Right cardiac atrium (tissue), 5 donors: ENCODE measurements at regions of chr7 and their contacts with region 1.

Region 1: GRCh38 chr7:97104719-97105238 is 12.7 kb upstream of the SDHAF3 start:
- DNase-seq: peak; percentile 84 to 95 (median 94)
- ATAC-seq: peak; percentile 94 to 96
- H3K4me3 ChIP-seq: no peak overlapping the region
- H3K27ac ChIP-seq: no peak overlapping the region
- H3K4me1 ChIP-seq: no peaks in the 10 kb centered on the region
- H3K27me3 ChIP-seq: no peaks in the 10 kb centered on the region

Region 2: DNA sequence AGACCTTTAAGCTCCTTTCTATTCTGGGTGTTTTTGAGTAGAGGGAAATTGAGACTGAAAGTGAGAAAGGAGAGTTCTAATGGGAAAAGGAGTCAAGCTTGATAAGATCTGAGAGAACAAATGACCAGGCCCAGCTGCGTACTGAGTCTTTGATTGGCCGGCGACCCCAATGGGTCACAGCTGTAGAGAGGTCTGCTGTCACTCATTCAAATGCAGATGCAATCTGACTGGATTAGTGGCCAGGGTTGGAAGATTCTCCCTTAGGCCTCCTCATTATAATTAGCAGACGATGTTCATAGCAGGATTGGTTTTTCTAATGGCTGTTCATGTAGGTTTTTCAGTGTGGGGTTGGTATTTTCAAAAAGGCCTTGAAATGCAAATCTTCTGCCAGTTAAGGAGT is 655.7 kb before region 1 on chr7:
- intact Hi-C with region 1: no loop called
- DNase-seq: no peak
- ATAC-seq: no peak
- H3K4me3 ChIP-seq: no peak overlapping the region
- H3K27ac ChIP-seq: no peak overlapping the region
- H3K4me1 ChIP-seq: no peaks in the 10 kb centered on the region
- H3K27me3 ChIP-seq: no peaks in the 10 kb centered on the region

Region 3: GRCh38 chr7:96837593-96837992 is 267.2 kb before region 1 on chr7:
- intact Hi-C with region 1: no loop called
- DNase-seq: no peak
- ATAC-seq: no peak
- H3K4me3 ChIP-seq: no peak overlapping the region
- H3K27ac ChIP-seq: no peak overlapping the region
- H3K4me1 ChIP-seq: no peaks in the 10 kb centered on the region
- H3K27me3 ChIP-seq: no peaks in the 10 kb centered on the region

Region 4: GRCh38 chr7:97179454-97180104 is 74.8 kb after region 1 on chr7:
- intact Hi-C with region 1: loop called in 3 of 4 experiments (anchors 2 to 5 kb)
- DNase-seq: no peak
- ATAC-seq: peak; percentile 40 to 67
- H3K4me3 ChIP-seq: no peak overlapping the region
- H3K27ac ChIP-seq: no peak overlapping the region
- H3K4me1 ChIP-seq: no peaks in the 10 kb centered on the region
- H3K27me3 ChIP-seq: no peaks in the 10 kb centered on the region

Region 5: DNA sequence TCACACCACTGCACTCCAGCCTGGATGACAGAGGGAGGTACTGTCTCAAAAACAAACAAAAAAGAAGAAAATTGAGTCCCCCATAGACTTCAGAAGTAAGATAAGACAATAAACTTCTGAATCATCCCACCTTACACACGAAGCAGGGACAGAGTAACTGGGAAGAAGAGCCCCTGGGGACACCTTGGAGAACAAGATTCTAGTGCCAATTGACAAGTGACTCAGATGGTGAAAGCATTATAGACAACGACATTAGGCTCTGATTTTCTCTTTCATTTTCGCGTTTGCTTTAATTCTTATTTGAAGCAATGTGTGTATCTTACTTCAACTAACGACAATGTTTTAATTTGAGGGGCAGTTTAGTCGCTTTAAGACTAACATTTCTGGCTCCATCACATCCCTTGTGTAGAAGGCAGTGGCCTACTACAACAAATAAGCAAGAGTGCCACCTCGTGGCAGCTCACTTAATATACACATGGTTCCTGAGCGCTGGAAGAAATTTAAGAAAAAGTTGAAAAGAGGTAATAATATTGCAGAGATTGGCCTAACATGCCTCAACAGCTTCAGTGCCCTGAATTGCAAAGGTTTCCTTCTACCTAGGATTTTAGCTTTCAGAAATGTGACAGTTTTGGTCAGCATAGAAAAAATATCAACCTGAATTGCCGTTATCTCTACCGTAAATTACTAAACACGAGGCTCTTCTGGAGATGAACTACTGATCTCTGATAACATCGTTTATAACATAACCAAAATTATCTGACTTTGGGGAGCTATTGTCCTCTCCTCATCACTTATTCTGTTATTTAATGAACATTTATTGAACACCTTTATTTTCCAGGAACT is 730.7 kb after region 1 on chr7:
- intact Hi-C with region 1: loop called (anchors 5 to 10 kb)
- DNase-seq: peak; percentile 50 to 85 (median 70)
- ATAC-seq: peak; percentile 59 to 66
- H3K4me3 ChIP-seq: no peak overlapping the region
- H3K27ac ChIP-seq: no peak overlapping the region
- H3K4me1 ChIP-seq: no peaks in the 10 kb centered on the region
- H3K27me3 ChIP-seq: peaks cover 3% of the 10 kb centered on the region

Region 6: GRCh38 chr7:97845622-97846203 is 740.9 kb after region 1 on chr7:
- intact Hi-C with region 1: loop called in 2 of 4 experiments (anchors 5 to 10 kb)
- DNase-seq: no peak
- ATAC-seq: no peak
- H3K4me3 ChIP-seq: no peak overlapping the region
- H3K27ac ChIP-seq: no peak overlapping the region
- H3K4me1 ChIP-seq: no peaks in the 10 kb centered on the region
- H3K27me3 ChIP-seq: no peaks in the 10 kb centered on the region